ENCODE measurements at regions of chr16 and their contacts with region 1.

Region 1: DNA sequence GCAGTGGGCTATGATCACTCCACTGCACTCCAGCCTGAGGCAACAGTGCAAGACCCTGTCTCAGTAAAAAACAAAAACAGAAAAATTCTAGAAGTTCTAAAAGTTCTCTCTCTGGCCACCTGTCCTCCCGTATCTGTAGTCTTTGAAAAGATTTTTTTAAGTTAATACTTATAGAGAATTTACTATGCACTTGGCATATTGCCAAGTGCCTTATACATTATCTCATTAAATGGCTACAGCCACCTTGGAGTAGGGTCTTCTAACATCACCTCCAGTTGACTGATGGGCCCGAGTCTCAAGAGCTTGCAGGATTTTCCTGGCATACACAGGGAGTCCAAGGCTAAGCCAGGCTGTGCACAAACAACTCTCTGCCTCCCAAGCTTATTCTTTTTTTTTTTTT is 44.7 kb downstream of the TMEM186 start:
- DNase-seq: no peak
- H3K4me3 ChIP-seq: no peak overlapping the region
- H3K27ac ChIP-seq: no peak overlapping the region
- H3K4me1 ChIP-seq: peaks cover 4% of the 10 kb centered on the region; the same call in 1 of the 2 replicates
- H3K27me3 ChIP-seq: no peaks in the 10 kb centered on the region
- CTCF ChIP-seq: no peak

Region 2: GRCh38 chr16:8611886-8612600 is 140.7 kb before region 1 on chr16:
- CTCF ChIA-PET with region 1: no interaction called
- POLR2A ChIA-PET with region 1: no interaction called
- intact Hi-C with region 1: no loop called
- DNase-seq: no peak
- H3K4me3 ChIP-seq: no peak overlapping the region
- H3K27ac ChIP-seq: no peak overlapping the region
- H3K4me1 ChIP-seq: no peaks in the 10 kb centered on the region
- H3K27me3 ChIP-seq: peaks cover 75% of the 10 kb centered on the region
- CTCF ChIP-seq: no peak

Region 3: GRCh38 chr16:8708536-8708935 is 44.2 kb before region 1 on chr16:
- CTCF ChIA-PET with region 1: interaction called, 12 read pairs
- POLR2A ChIA-PET with region 1: no interaction called
- intact Hi-C with region 1: no loop called
- DNase-seq: no peak
- H3K4me3 ChIP-seq: no peak overlapping the region
- H3K27ac ChIP-seq: no peak overlapping the region
- H3K4me1 ChIP-seq: no peaks in the 10 kb centered on the region
- H3K27me3 ChIP-seq: no peaks in the 10 kb centered on the region
- CTCF ChIP-seq: no peak